Motor neuron (in vitro differentiated cells): ENCODE measurements at regions of chr14 and their contacts with region 1.

Region 1: GRCh38 chr14:57182760-57183503 is 85.8 kb downstream of the EXOC5 start:
- ATAC-seq: peak in 3 of 8 experiments; percentile 33 to 65 (median 64)
- H3K4me3 ChIP-seq: no peak overlapping the region
- H3K27ac ChIP-seq: no peak overlapping the region
- H3K4me1 ChIP-seq: no peaks in the 10 kb centered on the region

Region 2: GRCh38 chr14:56514663-56515371 is 668.1 kb before region 1 on chr14:
- in situ Hi-C with region 1: loop called in 1 of 9 experiments (anchors 25 kb)
- ATAC-seq: peak in 5 of 8 experiments; percentile 41 to 82 (median 72)
- H3K4me3 ChIP-seq: no peak overlapping the region
- H3K27ac ChIP-seq: no peak overlapping the region
- H3K4me1 ChIP-seq: no peaks in the 10 kb centered on the region

Region 3: DNA sequence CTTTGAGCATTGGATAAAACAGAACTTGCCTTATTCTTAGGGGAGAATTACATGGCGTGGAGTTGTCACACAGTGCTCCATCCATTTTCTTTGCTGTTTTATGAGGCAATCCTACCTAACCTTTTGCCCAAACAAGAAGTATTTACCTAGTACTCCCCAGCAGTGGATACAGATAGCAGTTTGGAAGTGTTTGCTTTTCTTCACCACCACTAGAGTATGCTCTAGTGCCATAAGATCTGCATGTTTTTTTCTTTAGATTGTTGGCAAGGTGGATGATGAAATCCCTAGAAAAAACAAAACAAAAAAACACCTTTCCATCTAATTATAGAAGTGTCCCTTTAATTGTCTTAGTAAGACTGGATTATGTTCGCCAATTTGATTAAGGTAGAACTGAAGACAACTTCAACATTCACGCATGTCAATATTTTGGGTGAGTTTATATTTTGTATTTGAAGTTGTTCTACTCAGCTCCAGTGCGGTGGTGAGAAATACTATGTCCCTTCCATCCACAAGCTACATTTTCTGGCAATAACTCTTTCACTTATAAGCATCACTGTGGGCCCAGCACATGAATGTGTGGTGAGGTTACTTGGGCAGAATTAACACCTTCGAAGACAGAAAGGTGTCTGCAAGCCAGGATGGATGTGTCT is 626.9 kb before region 1 on chr14:
- in situ Hi-C with region 1: loop called in 1 of 9 experiments (anchors 25 kb)
- ATAC-seq: peak; percentile 21 to 84 (median 72)
- H3K4me3 ChIP-seq: no peak overlapping the region
- H3K27ac ChIP-seq: no peak overlapping the region
- H3K4me1 ChIP-seq: peaks cover 0 to 12% of the 10 kb centered on the region in 2 donors

Region 4: DNA sequence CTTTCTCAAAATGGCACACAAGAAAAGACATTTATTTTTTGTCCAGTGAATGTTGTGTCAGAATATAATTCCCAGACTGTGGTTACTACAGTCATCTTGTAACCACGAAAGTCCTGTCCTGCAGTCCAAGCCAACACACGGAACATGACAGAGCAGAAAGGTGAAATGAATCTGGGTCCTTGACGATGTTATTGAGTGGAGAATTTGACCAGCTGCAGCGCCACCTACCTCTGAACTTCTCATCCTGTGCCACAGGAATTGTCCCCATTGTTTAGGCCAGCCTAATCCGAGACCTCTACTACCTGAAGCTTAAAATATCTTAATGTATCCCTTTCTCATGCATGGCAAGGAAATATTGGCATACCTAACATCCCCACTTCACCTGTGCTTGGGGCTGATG is 308.6 kb before region 1 on chr14:
- in situ Hi-C with region 1: loop called in 1 of 9 experiments (anchors 25 kb)
- ATAC-seq: peak in 3 of 8 experiments; percentile 53 to 67 (median 66)
- H3K4me3 ChIP-seq: no peak overlapping the region
- H3K27ac ChIP-seq: no peak overlapping the region
- H3K4me1 ChIP-seq: no peaks in the 10 kb centered on the region